ENCODE measurements at regions of chr6 and their contacts with region 1.

Region 1: GRCh38 chr6:150417899-150418826 is 49.4 kb downstream of the IYD start:
- DNase-seq: peak in 4 of 14 experiments; percentile 16 to 70 (median 66)
- ATAC-seq: peak; percentile 59
- H3K4me3 ChIP-seq: peak overlapping the region; percentile 38
- H3K4me3 Mint-ChIP-seq: peak overlapping the region; percentile 78
- H3K27ac ChIP-seq: no peak overlapping the region
- H3K27ac Mint-ChIP-seq: no peak overlapping the region
- H3K4me1 ChIP-seq: peaks cover 5% of the 10 kb centered on the region
- H3K4me1 Mint-ChIP-seq: peaks cover 6% of the 10 kb centered on the region
- H3K27me3 ChIP-seq: peaks cover 7 to 16% of the 10 kb centered on the region in 2 experiments
- H3K27me3 Mint-ChIP-seq: peaks cover 43% of the 10 kb centered on the region
- CTCF ChIP-seq: peak; percentile 47

Region 2: DNA sequence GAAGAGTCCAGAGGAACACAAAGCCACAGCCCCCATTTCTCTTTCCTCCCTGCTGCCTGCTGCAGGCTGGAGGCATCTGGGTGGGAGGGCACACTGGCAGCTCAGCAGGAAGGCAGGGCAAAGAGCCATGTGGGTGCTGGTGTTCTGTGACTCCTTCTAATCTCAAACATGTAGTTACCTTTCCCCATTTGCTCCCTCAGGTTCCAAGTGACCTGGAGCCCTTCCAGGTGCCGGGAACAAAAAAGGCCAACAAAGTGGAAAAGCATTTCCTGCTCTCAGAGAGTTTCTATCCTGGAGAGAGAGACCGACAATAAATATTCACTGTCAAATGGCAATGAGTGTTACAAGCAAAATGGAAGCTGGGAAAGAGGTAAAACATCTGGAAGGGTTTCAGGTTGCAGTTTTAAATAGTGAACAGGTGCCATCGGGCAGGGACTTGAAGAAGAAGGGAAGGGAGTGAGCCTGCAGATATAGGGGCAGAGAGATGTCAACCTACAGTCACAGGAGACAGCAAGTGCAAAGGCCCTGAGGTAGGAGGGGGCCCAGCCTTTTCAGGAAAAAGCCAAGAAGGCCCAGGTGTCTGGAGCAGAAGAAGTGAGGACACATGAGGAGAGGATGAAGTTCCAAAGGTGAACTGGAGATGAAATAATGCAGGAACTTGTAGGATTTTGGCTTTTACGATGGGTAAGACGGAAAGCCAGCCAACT is 92.9 kb before region 1 on chr6:
- CTCF ChIA-PET with region 1: no interaction called
- POLR2A ChIA-PET with region 1: no interaction called
- intact Hi-C with region 1: no loop called
- DNase-seq: no peak
- ATAC-seq: no peak
- H3K4me3 ChIP-seq: no peak overlapping the region
- H3K4me3 Mint-ChIP-seq: no peak overlapping the region
- H3K27ac ChIP-seq: no peak overlapping the region
- H3K27ac Mint-ChIP-seq: no peak overlapping the region
- H3K4me1 ChIP-seq: no peaks in the 10 kb centered on the region
- H3K4me1 Mint-ChIP-seq: no peaks in the 10 kb centered on the region
- H3K27me3 ChIP-seq: peaks cover 0 to 3% of the 10 kb centered on the region in 2 experiments
- H3K27me3 Mint-ChIP-seq: no peaks in the 10 kb centered on the region
- CTCF ChIP-seq: no peak

Region 3: GRCh38 chr6:150599199-150600009 is 181.2 kb after region 1 on chr6 and contains the start of gene PLEKHG1:
- CTCF ChIA-PET with region 1: no interaction called
- POLR2A ChIA-PET with region 1: no interaction called
- intact Hi-C with region 1: loop called in 1 of 2 experiments (anchors 5 kb)
- DNase-seq: peak; percentile 7 to 78 (median 38)
- ATAC-seq: peak; percentile 72
- H3K4me3 ChIP-seq: peak within 1 kb of the TSS; percentile 66
- H3K4me3 Mint-ChIP-seq: peak within 1 kb of the TSS; percentile 96
- H3K27ac ChIP-seq: no peak within 1 kb of the TSS
- H3K27ac Mint-ChIP-seq: peak within 1 kb of the TSS; percentile 79
- H3K4me1 ChIP-seq: peaks cover 13% of the 10 kb centered on the region
- H3K4me1 Mint-ChIP-seq: peaks cover 14% of the 10 kb centered on the region
- H3K27me3 ChIP-seq: peaks cover 2 to 33% of the 10 kb centered on the region in 2 experiments
- H3K27me3 Mint-ChIP-seq: peaks cover 48% of the 10 kb centered on the region
- CTCF ChIP-seq: no peak
- total RNA-seq, gene PLEKHG1: 1.5 to 1.8 TPM

Region 4: GRCh38 chr6:150741633-150742504 is 323.7 kb after region 1 on chr6:
- CTCF ChIA-PET with region 1: no interaction called
- POLR2A ChIA-PET with region 1: no interaction called
- intact Hi-C with region 1: loop called (anchors 1 to 2 kb)
- DNase-seq: peak in 3 of 14 experiments; percentile 16 to 35 (median 24)
- ATAC-seq: no peak
- H3K4me3 ChIP-seq: no peak overlapping the region
- H3K4me3 Mint-ChIP-seq: no peak overlapping the region
- H3K27ac ChIP-seq: no peak overlapping the region
- H3K27ac Mint-ChIP-seq: no peak overlapping the region
- H3K4me1 ChIP-seq: no peaks in the 10 kb centered on the region
- H3K4me1 Mint-ChIP-seq: no peaks in the 10 kb centered on the region
- H3K27me3 ChIP-seq: no peaks in the 10 kb centered on the region
- H3K27me3 Mint-ChIP-seq: no peaks in the 10 kb centered on the region
- CTCF ChIP-seq: no peak